Activated CD4-positive, alpha-beta T cell treated with anti-CD3 and anti-CD28 coated beads for 36 hours (primary cell): ENCODE measurements at regions of chr17 and their contacts with region 1.

Region 1: DNA sequence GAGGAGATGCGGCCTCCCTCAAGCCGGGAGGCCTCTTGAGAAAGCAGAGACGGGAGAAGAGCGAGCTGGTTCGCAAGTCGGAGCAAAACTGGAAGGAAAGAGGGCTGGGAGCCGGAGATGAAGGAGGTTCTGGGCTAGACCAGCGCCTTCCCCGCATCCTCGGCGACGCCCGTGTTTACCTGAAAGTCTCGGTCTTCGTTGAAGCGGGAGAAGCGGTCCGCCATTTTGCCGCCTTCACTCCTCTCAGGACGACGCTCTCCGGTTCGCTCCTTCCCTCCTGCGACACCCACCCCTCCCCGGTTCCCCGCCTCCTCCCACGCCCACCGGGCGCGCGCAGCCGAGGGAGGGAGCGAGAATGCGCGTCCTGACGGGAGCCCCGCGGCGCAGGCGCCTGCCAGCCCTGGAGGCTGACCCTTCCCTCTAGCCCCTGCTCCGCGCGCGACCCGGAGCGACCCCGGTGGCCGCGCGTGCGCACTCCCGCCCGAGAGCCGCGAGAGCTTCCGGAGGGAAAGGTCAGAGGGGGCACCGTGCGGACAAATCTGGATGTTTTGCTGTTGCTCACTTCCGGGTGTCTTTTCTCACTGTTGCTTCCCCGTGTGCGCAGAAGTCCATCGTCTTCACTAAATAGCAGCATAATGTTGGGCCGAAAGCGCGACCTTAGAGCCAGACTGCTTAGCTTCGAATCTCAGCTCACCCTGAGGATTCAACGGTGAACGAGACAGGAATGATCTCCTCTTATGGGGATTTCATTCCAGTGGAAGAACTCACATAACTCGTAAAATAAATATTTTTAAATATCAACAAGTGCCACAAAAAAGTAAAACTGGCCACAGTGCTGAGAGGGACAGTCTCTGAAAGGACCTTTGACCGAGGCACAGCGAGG is at the start of gene GPATCH8:
- DNase-seq: peak; percentile 97
- ATAC-seq: peak; percentile 96
- H3K4me3 Mint-ChIP-seq: peak within 1 kb of the TSS; percentile 97
- H3K27ac Mint-ChIP-seq: peak within 1 kb of the TSS; percentile 98
- H3K4me1 Mint-ChIP-seq: peaks cover 34% of the 10 kb centered on the region
- H3K27me3 Mint-ChIP-seq: peaks cover 3% of the 10 kb centered on the region
- total RNA-seq, gene GPATCH8: 39.6 to 43.2 TPM

Region 2: GRCh38 chr17:44070455-44071197 is 432.8 kb before region 1 on chr17 and contains the start of gene G6PC3:
- CTCF ChIA-PET with region 1: no interaction called
- POLR2A ChIA-PET with region 1: no interaction called
- intact Hi-C with region 1: loop called in 1 of 2 experiments (anchors 1 kb)
- DNase-seq: peak; percentile 93
- ATAC-seq: peak; percentile 68
- H3K4me3 Mint-ChIP-seq: peak within 1 kb of the TSS; percentile 93
- H3K27ac Mint-ChIP-seq: peak within 1 kb of the TSS; percentile 98
- H3K4me1 Mint-ChIP-seq: peaks cover 30% of the 10 kb centered on the region
- H3K27me3 Mint-ChIP-seq: no peaks in the 10 kb centered on the region
- total RNA-seq, gene G6PC3: 21.3 to 22.0 TPM

Region 3: GRCh38 chr17:44199553-44200477 is 303.6 kb before region 1 on chr17 and contains the start of gene ATXN7L3:
- CTCF ChIA-PET with region 1: no interaction called
- POLR2A ChIA-PET with region 1: no interaction called
- intact Hi-C with region 1: loop called (anchors 1 to 10 kb)
- DNase-seq: peak; percentile 100
- ATAC-seq: peak; percentile 84
- H3K4me3 Mint-ChIP-seq: peak within 1 kb of the TSS; percentile 88
- H3K27ac Mint-ChIP-seq: peak within 1 kb of the TSS; percentile 94
- H3K4me1 Mint-ChIP-seq: peaks cover 38% of the 10 kb centered on the region
- H3K27me3 Mint-ChIP-seq: no peaks in the 10 kb centered on the region
- total RNA-seq, gene ATXN7L3: 66.3 to 70.6 TPM

Region 4: DNA sequence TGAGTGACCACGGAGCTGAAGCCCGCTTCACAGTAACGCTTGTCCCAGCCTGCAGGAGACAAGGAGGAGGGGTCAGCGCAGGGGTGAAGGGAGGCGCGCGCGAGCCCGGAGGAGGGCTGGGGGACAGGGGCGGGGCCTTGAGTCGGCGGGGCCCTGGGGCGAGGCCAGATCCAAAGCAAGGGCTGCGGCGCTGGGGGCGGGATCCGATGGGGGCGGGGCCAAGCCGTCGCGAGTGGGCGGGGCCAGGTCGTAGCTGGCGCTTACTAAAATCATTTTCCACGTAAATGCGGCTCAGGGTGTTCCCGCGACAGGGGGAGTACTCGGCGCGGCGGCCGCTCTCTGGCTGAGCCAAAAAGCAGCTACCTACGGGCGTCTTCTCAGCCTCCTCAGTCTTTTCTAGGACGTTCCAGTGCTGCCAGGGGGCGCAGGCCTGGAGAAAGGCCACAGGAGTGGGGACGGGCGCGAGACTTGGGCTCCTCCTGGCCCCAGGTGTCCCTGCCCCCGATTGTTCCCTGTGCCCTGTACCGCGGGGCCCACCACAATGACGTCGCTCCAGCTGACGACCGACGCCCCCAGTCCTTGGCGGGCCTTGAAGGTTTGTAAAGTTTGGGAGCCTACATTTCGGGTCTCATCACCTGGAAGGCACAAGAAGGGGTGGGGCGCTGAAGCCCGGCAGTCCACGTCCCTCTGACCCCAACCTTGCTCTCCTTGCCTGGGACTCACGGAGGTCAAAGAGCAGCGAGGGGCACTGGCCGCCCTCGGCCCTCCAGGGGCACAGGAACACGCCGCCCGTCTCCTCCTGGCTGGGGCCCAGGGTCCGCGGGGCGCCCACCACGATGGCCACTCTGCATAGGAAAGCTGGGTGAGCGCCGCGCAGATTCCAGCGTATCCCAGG is 117.9 kb before region 1 on chr17:
- CTCF ChIA-PET with region 1: interaction called, 4 read pairs
- POLR2A ChIA-PET with region 1: no interaction called
- intact Hi-C with region 1: loop called in 1 of 2 experiments (anchors 1 kb)
- DNase-seq: peak; percentile 96
- ATAC-seq: peak; percentile 96
- H3K4me3 Mint-ChIP-seq: peak overlapping the region; percentile 62
- H3K27ac Mint-ChIP-seq: peak overlapping the region; percentile 21
- H3K4me1 Mint-ChIP-seq: peaks cover 12% of the 10 kb centered on the region
- H3K27me3 Mint-ChIP-seq: peaks cover 22% of the 10 kb centered on the region

Region 5: GRCh38 chr17:44899069-44899782 is 395.8 kb after region 1 on chr17 and contains the start of gene EFTUD2:
- CTCF ChIA-PET with region 1: no interaction called
- POLR2A ChIA-PET with region 1: no interaction called
- intact Hi-C with region 1: loop called in 1 of 2 experiments (anchors 2 kb)
- DNase-seq: peak; percentile 95
- ATAC-seq: peak; percentile 94
- H3K4me3 Mint-ChIP-seq: peak within 1 kb of the TSS; percentile 98
- H3K27ac Mint-ChIP-seq: peak within 1 kb of the TSS; percentile 98
- H3K4me1 Mint-ChIP-seq: peaks cover 26% of the 10 kb centered on the region
- H3K27me3 Mint-ChIP-seq: no peaks in the 10 kb centered on the region
- total RNA-seq, gene EFTUD2: 175 to 203 TPM

Region 6: DNA sequence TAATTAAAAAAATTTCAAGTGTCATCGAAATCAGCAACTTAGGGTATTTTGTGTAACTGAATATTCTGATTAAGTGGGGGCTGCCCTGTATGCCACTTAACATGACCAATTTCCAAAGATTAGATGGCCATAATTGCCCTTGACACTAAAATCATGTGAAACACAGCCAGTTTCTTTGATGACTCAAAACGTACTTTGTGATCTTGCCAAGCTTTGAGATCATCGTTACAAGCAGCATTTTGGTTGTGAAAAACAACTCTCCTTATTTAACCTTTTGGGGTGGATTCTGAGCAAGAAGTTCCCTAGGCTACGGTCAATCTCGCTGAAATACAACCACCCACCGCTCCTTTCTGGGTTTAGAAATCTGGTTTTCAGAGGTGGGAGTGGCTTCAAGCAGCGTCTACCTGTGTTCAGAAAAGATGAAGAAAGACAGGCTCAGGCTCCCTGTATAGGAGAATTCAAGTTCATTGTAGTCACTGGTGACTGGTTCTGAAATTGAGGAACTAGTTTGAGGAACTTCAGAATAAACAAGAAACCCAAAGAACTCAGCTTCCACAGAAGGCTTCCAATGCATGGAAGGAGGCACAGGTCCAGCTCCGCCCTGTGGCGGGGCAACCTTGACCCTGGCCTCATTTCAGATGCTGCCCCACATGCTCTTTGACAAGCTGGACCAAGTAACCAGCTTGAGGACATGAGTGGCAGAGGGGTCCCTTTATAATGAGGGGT is 804.1 kb after region 1 on chr17:
- CTCF ChIA-PET with region 1: no interaction called
- POLR2A ChIA-PET with region 1: no interaction called
- intact Hi-C with region 1: loop called in 1 of 2 experiments (anchors 2 kb)
- DNase-seq: peak; percentile 78
- ATAC-seq: peak; percentile 56
- H3K4me3 Mint-ChIP-seq: peak overlapping the region; percentile 44
- H3K27ac Mint-ChIP-seq: peak overlapping the region; percentile 97
- H3K4me1 Mint-ChIP-seq: peaks cover 89% of the 10 kb centered on the region
- H3K27me3 Mint-ChIP-seq: no peaks in the 10 kb centered on the region